Activated CD4-positive, alpha-beta memory T cell treated with anti-CD3 and anti-CD28 coated beads for 36 hours (primary cell): ENCODE measurements at regions of chr18 and their contacts with region 1.

Region 1: GRCh38 chr18:5237723-5238370 is 40.8 kb upstream of the AKAIN1 start:
- DNase-seq: peak; percentile 89
- H3K4me3 Mint-ChIP-seq: peak overlapping the region; percentile 90
- H3K27ac Mint-ChIP-seq: peak overlapping the region; percentile 95
- H3K4me1 Mint-ChIP-seq: peaks cover 27% of the 10 kb centered on the region
- H3K27me3 Mint-ChIP-seq: no peaks in the 10 kb centered on the region

Region 2: GRCh38 chr18:4704781-4705180 is 533.1 kb before region 1 on chr18:
- CTCF ChIA-PET with region 1: no interaction called
- POLR2A ChIA-PET with region 1: no interaction called
- intact Hi-C with region 1: no loop called
- DNase-seq: no peak
- H3K4me3 Mint-ChIP-seq: no peak overlapping the region
- H3K27ac Mint-ChIP-seq: no peak overlapping the region
- H3K4me1 Mint-ChIP-seq: no peaks in the 10 kb centered on the region
- H3K27me3 Mint-ChIP-seq: no peaks in the 10 kb centered on the region

Region 3: DNA sequence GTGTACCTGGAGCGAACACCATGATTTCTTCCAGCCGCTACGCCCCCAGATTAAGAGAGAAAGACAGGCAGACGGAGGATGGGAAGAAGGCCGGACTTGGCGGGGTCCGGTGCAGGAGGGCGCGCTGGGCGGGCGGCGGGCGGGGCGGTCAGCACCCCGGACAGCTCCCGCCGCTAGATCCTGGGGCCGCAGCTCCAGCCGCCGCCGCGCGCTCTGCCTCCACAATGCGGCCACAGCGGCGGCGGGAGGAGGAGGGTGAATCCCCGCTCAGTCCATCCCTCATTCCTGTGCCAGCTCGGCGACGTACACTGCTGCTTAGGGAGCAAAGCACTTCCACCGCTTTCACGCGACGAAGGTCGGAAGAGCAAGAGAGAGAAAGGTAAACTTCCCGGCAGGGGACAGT is 40.8 kb before region 1 on chr18 and contains the start of gene AKAIN1:
- CTCF ChIA-PET with region 1: no interaction called
- POLR2A ChIA-PET with region 1: no interaction called
- intact Hi-C with region 1: no loop called
- DNase-seq: peak; percentile 26
- H3K4me3 Mint-ChIP-seq: no peak within 1 kb of the TSS
- H3K27ac Mint-ChIP-seq: no peak within 1 kb of the TSS
- H3K4me1 Mint-ChIP-seq: peaks cover 10% of the 10 kb centered on the region
- H3K27me3 Mint-ChIP-seq: peaks cover 60% of the 10 kb centered on the region
- total RNA-seq, gene AKAIN1: not detected

Region 4: DNA sequence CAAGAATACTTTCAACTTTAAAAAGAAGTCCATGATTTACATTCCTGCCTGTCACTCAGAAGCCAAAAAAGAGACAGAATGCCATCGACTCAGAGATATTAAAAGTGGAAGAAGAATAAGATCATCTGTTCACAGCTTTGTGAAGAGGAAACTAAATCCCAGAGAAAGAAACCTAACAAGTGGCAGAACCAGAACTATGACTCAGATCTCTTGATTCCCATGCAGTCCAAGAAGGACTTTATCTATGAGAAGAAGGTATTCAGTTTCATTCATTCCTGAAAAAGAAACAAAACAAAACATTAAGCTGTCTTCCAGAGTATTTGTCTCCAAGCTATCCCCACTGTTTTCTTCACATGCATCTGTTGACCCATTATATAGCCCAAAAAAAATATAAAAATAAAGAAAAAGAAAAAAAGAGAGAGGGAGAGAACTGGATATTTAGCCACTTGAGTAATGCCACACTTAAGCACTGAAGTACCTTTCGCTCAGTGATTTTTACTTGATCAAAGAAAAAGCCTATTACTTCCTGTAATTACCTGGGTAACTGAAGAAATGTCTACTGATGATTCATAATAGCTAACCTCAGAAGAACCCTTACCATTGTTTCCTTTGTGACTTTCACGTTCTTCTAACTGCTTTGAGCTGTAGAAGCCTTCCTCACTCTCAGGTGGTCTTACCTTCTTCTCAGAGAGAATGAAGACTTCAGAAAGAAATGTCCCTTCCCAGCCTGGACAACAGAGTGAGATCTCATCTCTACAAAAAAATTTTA is 23.1 kb before region 1 on chr18:
- CTCF ChIA-PET with region 1: interaction called, 4 read pairs
- POLR2A ChIA-PET with region 1: no interaction called
- intact Hi-C with region 1: loop called (anchors 1 kb)
- DNase-seq: no peak
- H3K4me3 Mint-ChIP-seq: no peak overlapping the region
- H3K27ac Mint-ChIP-seq: no peak overlapping the region
- H3K4me1 Mint-ChIP-seq: peaks cover 9% of the 10 kb centered on the region
- H3K27me3 Mint-ChIP-seq: peaks cover 10% of the 10 kb centered on the region

Region 5: DNA sequence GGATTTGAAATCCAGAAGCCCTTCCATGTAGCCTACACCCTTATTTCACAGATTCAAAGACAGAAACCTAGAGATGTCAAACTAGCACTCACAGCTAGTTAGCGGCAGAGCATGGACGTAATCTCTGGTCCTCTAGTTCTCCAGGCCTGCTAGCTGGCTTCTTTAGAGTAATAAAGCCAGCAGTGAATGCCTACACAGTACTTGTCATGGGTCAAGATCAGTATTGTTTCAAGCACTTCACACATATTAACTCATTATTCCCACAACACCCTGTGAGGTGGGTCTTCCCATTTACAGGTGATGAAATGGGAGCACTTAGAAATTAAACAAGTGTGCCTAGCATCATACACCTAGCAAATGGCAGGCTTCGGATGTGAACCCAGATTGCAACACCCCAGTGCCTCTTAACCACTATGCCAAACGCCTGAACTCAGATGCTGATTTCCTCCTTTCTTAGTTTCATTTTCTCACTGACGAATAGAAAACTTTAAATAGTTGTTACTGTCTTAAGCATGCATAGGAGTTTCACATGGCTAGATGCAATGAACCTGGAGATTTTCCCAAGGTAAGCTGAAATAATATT is 72.1 kb after region 1 on chr18:
- CTCF ChIA-PET with region 1: interaction called, 3 read pairs
- POLR2A ChIA-PET with region 1: interaction called, 3 read pairs
- intact Hi-C with region 1: loop called (anchors 1 kb)
- DNase-seq: peak; percentile 51
- H3K4me3 Mint-ChIP-seq: peak overlapping the region; percentile 70
- H3K27ac Mint-ChIP-seq: peak overlapping the region; percentile 46
- H3K4me1 Mint-ChIP-seq: peaks cover 17% of the 10 kb centered on the region
- H3K27me3 Mint-ChIP-seq: no peaks in the 10 kb centered on the region